ENCODE measurements at regions of chr2 and their contacts with region 1.

Region 1: GRCh38 chr2:37877457-37878315 is 47.4 kb upstream of the RMDN2 start:
- DNase-seq: peak; percentile 75
- H3K4me3 ChIP-seq: peak overlapping the region in 1 of 2 experiments; percentile 7; a peak in 1 of 4 replicates
- H3K27ac ChIP-seq: peak overlapping the region in 1 of 2 experiments; percentile 77; a peak in 2 of 4 replicates
- H3K4me1 ChIP-seq: peaks cover 0 to 23% of the 10 kb centered on the region in 2 experiments; a peak in 2 of 4 replicates
- H3K27me3 ChIP-seq: no peaks in the 10 kb centered on the region
- CTCF ChIP-seq: peak; percentile 91
- EP300 ChIP-seq: no peak; a peak in 1 of 4 replicates
- RAD21 ChIP-seq: peak; percentile 99

Region 2: GRCh38 chr2:37389989-37390765 is 487.5 kb before region 1 on chr2:
- CTCF ChIA-PET with region 1: interaction called, 546 read pairs
- POLR2A ChIA-PET with region 1: no interaction called
- DNase-seq: no peak
- H3K4me3 ChIP-seq: no peak overlapping the region
- H3K27ac ChIP-seq: peak overlapping the region in 1 of 2 experiments; percentile 68; a peak in 2 of 4 replicates
- H3K4me1 ChIP-seq: peaks cover 6 to 32% of the 10 kb centered on the region in 2 experiments; a peak in 3 of 4 replicates
- H3K27me3 ChIP-seq: no peaks in the 10 kb centered on the region
- CTCF ChIP-seq: no peak
- EP300 ChIP-seq: peak in 1 of 2 experiments; percentile 62; a peak in 1 of 4 replicates
- RAD21 ChIP-seq: no peak

Region 3: GRCh38 chr2:37555457-37555856 is 322.2 kb before region 1 on chr2:
- CTCF ChIA-PET with region 1: interaction called, 25 read pairs
- POLR2A ChIA-PET with region 1: interaction called, 6 read pairs
- DNase-seq: no peak
- H3K4me3 ChIP-seq: no peak overlapping the region
- H3K27ac ChIP-seq: peak overlapping the region in 1 of 2 experiments; percentile 99; a peak in 2 of 4 replicates
- H3K4me1 ChIP-seq: peaks cover under 1 to 42% of the 10 kb centered on the region in 2 experiments; a peak in 3 of 4 replicates
- H3K27me3 ChIP-seq: no peaks in the 10 kb centered on the region
- CTCF ChIP-seq: no peak
- EP300 ChIP-seq: no peak
- RAD21 ChIP-seq: no peak

Region 4: GRCh38 chr2:37653805-37654378 is 223.8 kb before region 1 on chr2:
- CTCF ChIA-PET with region 1: interaction called, 31 read pairs
- POLR2A ChIA-PET with region 1: no interaction called
- DNase-seq: no peak
- H3K4me3 ChIP-seq: no peak overlapping the region
- H3K27ac ChIP-seq: peak overlapping the region; percentile 77 to 87
- H3K4me1 ChIP-seq: peaks cover 62 to 65% of the 10 kb centered on the region in 2 experiments
- H3K27me3 ChIP-seq: no peaks in the 10 kb centered on the region
- CTCF ChIP-seq: no peak
- EP300 ChIP-seq: no peak; a peak in 1 of 4 replicates
- RAD21 ChIP-seq: no peak

Region 5: GRCh38 chr2:37819186-37819585 is 58.5 kb before region 1 on chr2:
- CTCF ChIA-PET with region 1: interaction called, 247 read pairs
- POLR2A ChIA-PET with region 1: no interaction called
- DNase-seq: peak; percentile 27
- H3K4me3 ChIP-seq: no peak overlapping the region
- H3K27ac ChIP-seq: peak overlapping the region; percentile 47 to 68; a peak in 3 of 4 replicates
- H3K4me1 ChIP-seq: peaks cover 12 to 15% of the 10 kb centered on the region in 2 experiments; a peak in 3 of 4 replicates
- H3K27me3 ChIP-seq: no peaks in the 10 kb centered on the region
- CTCF ChIP-seq: no peak
- EP300 ChIP-seq: peak in 1 of 2 experiments; percentile 80; a peak in 1 of 4 replicates
- RAD21 ChIP-seq: no peak

Region 6: GRCh38 chr2:37890893-37891495 is 13.3 kb after region 1 on chr2:
- CTCF ChIA-PET with region 1: interaction called, 97 read pairs
- POLR2A ChIA-PET with region 1: no interaction called
- DNase-seq: peak; percentile 85
- H3K4me3 ChIP-seq: no peak overlapping the region
- H3K27ac ChIP-seq: no peak overlapping the region; a peak in 1 of 4 replicates
- H3K4me1 ChIP-seq: peaks cover 6 to 8% of the 10 kb centered on the region in 2 experiments; a peak in 3 of 4 replicates
- H3K27me3 ChIP-seq: no peaks in the 10 kb centered on the region
- CTCF ChIP-seq: peak; percentile 95
- EP300 ChIP-seq: no peak
- RAD21 ChIP-seq: peak; percentile 95

Region 7: GRCh38 chr2:38239461-38239860 is 361.8 kb after region 1 on chr2:
- CTCF ChIA-PET with region 1: no interaction called
- POLR2A ChIA-PET with region 1: no interaction called
- DNase-seq: no peak
- H3K4me3 ChIP-seq: no peak overlapping the region
- H3K27ac ChIP-seq: no peak overlapping the region
- H3K4me1 ChIP-seq: peaks cover 0 to 2% of the 10 kb centered on the region in 2 experiments; a peak in 2 of 4 replicates
- H3K27me3 ChIP-seq: no peaks in the 10 kb centered on the region; the same call in 1 of the 2 replicates
- CTCF ChIP-seq: no peak
- EP300 ChIP-seq: no peak
- RAD21 ChIP-seq: no peak

Region 8: DNA sequence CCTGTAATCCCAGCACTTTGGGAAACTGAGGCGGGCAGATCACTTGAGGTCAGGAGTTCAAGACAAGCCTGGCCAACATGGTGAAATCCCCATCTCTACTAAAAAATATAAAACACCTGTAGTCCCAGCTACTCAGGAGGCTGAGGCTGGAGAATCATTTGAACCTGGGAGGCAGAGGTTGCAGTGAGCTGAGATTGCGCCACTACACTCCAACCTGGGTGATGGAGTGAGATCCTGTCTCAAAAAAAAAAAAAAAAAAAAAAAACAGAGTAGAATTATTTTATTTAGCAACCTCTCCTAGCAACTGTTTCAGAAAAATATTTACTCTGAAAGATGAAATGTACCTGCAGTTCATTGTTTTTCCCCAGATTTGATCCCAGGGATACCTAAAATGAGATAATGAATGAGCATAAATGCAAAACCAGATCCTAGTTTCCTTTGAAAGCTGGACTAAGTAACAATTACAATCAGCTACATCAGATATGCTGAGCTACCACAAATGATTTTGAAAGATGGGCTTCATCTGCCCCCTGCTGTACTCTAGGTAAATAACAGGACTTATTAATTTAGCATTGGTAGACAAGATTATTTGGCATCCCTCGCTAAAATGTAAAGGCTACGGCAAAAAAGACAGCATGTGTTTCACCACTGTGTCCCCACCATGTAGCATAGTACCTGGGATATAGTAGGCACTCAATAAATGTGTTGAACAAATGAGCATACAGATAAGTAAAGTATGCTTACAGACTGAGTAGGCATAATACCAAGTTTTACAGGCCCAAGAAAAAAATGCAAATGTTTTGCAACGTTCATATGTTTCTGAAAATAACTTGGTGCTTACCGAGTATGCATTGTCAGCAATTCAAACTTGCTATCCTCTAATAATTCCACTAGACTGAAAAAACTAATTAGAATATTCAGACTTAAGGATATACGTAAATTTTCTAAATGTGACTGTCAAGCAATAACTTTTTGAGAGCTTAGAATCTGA is 396.9 kb after region 1 on chr2:
- CTCF ChIA-PET with region 1: interaction called, 21 read pairs
- POLR2A ChIA-PET with region 1: no interaction called
- DNase-seq: peak; percentile 81
- H3K4me3 ChIP-seq: no peak overlapping the region
- H3K27ac ChIP-seq: 0 out of 4 replicates have a peak overlapping the region, but pooled peaks of 1 of the 2 experiments have one; percentile 18
- H3K4me1 ChIP-seq: no peaks in the 10 kb centered on the region; a peak in 1 of 4 replicates
- H3K27me3 ChIP-seq: no peaks in the 10 kb centered on the region
- CTCF ChIP-seq: peak; percentile 86
- EP300 ChIP-seq: peak in 1 of 2 experiments; percentile 50; a peak in 1 of 4 replicates
- RAD21 ChIP-seq: peak; percentile 100

Measured in SK-N-SH (cell line).